GM10248 (cell line): ENCODE measurements at regions of chr22 and their contacts with region 1.

Region 1: GRCh38 chr22:40436505-40437451 is 66.4 kb downstream of the SGSM3 start:
- DNase-seq: peak; percentile 53
- CTCF ChIP-seq: peak; percentile 35

Region 2: DNA sequence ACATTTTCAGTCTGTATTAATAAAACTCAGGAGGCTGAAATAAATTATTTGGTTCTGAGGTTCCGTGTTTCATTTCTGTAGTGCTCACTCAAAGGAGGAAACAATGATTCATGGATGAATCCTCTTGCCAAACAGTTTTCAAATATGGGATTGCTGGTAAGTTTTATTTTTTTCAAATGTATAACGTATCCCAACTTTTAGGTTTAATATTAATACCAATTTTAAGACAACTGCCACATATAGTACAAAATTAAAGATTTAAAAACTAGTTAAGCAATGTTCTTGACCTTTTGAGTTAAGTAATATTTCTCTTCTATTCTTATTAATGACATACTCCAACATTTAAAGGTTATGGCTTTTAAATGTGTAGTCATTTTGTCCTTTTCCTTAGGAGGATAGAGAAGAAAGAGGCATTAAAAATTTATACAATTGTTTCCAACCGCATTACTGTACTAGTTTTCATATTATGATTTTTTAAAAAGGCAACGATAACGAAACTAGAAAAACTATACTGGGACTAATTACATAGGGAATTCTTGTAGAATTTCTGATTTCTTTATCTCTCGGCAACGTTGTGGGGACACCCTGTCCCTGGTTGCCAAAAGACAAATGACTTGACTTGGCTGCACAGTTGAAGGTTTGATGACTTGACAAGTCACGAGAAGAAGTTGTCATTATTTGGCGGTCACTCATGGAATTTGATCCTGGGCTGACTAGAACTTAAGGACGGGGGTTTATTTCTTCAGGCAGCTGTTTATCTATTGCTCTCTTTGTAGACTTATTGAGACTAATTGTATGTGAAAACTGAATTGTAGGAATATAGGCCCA is 159.6 kb before region 1 on chr22:
- CTCF ChIA-PET with region 1: no interaction called
- POLR2A ChIA-PET with region 1: no interaction called
- DNase-seq: no peak
- CTCF ChIP-seq: no peak

Region 3: GRCh38 chr22:40400159-40400558 is 36.6 kb before region 1 on chr22:
- CTCF ChIA-PET with region 1: interaction called, 16 read pairs
- POLR2A ChIA-PET with region 1: interaction called, 3 read pairs
- DNase-seq: peak; percentile 61
- CTCF ChIP-seq: no peak

Region 4: DNA sequence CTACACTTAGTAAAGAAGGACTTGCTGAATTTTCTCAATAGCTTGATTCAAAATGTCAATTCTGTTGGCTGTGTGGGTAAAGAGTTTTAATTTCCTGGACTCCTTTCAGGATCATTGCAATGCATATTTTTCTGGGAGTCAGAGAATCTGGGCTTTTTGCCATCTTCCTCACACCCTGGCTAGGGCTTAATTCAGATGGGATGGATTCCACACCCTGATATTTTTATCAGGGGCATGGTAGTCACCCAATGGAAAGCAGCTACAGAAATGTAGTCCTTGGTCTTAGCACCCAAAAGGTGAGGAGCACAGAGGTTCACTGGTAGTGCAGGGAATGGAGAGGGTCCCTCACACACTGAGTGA is 12.9 kb after region 1 on chr22:
- CTCF ChIA-PET with region 1: interaction called, 27 read pairs
- POLR2A ChIA-PET with region 1: no interaction called
- DNase-seq: no peak
- CTCF ChIP-seq: no peak

Region 5: DNA sequence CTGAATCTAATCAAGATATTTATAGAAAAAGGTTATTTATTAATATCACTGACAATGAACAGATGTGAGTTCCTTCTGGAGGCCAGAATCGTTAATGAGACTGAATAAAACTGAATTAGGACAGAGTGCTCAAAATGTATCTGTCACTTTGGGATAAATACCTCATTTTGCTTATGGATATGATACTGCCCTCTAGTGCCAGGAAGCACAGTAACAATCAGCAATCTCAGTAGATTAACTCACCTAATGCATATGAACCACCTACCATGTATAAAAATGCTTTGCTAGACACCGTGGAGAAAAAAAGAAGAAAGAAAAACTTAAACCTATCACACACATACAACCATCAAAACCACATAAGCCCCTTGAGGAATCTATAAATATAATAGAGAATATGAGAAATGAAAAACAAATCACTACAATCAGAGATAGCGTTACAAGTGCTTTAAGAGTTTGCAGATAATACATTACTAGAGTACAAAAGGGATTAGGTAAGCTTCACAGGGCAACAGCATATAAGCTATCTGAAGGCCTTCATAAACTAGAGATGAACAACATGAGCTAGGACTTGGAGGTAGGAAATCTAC is 51.0 kb after region 1 on chr22:
- CTCF ChIA-PET with region 1: interaction called, 44 read pairs
- POLR2A ChIA-PET with region 1: no interaction called
- DNase-seq: peak; percentile 43
- CTCF ChIP-seq: peak; percentile 65

Region 6: DNA sequence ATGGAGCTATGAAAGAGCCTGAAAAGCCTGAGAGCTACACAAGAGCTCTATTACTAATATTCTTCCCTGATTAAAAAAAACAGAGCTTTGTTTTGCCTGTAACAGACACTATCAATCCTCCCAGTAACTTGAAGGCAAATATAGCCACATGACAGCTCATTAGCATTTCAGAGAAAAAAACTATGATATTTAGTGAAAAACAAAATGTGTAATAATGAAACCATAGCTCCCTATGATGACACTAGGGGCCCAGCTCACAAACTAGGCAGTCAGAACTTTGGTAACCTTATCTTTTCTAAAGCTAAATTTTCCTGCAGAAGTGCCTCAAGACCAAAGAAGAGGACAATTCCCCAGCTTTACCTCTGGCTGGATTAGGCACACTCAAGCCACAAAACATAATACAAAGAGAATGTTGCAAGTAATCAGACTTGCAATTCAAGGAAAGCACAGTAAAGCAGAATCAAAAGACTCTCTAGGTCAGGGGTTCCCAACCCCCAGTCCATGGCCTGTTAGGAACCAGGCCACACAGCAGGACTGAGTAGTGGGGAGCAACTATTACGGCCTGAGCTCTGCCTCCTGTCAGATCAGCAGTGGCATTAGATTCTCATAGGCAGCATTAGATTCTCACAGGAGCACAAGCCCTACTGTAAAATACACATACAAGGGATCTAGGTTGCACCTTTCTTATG is 146.4 kb after region 1 on chr22:
- CTCF ChIA-PET with region 1: interaction called, 10 read pairs
- POLR2A ChIA-PET with region 1: no interaction called
- DNase-seq: peak; percentile 54
- CTCF ChIP-seq: no peak

Region 7: GRCh38 chr22:40645579-40646197 is 208.9 kb after region 1 on chr22:
- CTCF ChIA-PET with region 1: interaction called, 78 read pairs
- POLR2A ChIA-PET with region 1: no interaction called
- DNase-seq: no peak
- CTCF ChIP-seq: no peak